ENCODE measurements at regions of chr10 and their contacts with region 1.

Region 1: GRCh38 chr10:97412891-97413304 is 11.8 kb upstream of the RRP12 start:
- DNase-seq: peak; percentile 83
- ATAC-seq: peak; percentile 50
- H3K4me3 Mint-ChIP-seq: peak overlapping the region; percentile 56
- H3K27ac Mint-ChIP-seq: peak overlapping the region; percentile 88
- H3K4me1 Mint-ChIP-seq: peaks cover 59% of the 10 kb centered on the region
- H3K27me3 Mint-ChIP-seq: no peaks in the 10 kb centered on the region

Region 2: DNA sequence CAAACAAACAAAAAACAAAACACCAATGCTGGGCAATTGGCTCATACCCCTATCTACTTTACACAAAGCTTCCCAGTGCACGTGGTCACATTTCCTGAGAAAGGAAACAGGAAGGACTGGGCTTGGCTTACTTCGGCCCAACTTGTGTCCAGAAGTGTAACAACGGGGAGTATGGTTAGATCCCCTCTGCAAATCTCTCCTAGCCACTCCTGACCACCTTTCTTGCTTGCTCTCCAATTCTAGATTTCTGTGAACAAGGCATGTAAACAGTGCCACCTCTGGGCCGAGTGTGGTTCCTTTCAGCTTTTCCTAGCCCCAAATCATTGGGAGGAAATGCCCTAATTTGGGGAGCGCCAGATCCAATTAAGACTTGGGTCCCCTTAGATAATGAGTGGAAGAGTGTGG is 57.3 kb before region 1 on chr10:
- CTCF ChIA-PET with region 1: no interaction called
- DNase-seq: no peak
- ATAC-seq: no peak
- H3K4me3 Mint-ChIP-seq: no peak overlapping the region
- H3K27ac Mint-ChIP-seq: no peak overlapping the region
- H3K4me1 Mint-ChIP-seq: peaks cover 8% of the 10 kb centered on the region
- H3K27me3 Mint-ChIP-seq: no peaks in the 10 kb centered on the region

Region 3: GRCh38 chr10:97425964-97426775 is 13.3 kb after region 1 on chr10 and contains the start of gene PGAM1:
- CTCF ChIA-PET with region 1: interaction called, 122 read pairs
- DNase-seq: peak; percentile 97
- ATAC-seq: peak; percentile 85
- H3K4me3 Mint-ChIP-seq: peak within 1 kb of the TSS; percentile 87
- H3K27ac Mint-ChIP-seq: peak within 1 kb of the TSS; percentile 93
- H3K4me1 Mint-ChIP-seq: peaks cover 46% of the 10 kb centered on the region
- H3K27me3 Mint-ChIP-seq: no peaks in the 10 kb centered on the region
- total RNA-seq, gene PGAM1: 459 to 582 TPM

Region 4: DNA sequence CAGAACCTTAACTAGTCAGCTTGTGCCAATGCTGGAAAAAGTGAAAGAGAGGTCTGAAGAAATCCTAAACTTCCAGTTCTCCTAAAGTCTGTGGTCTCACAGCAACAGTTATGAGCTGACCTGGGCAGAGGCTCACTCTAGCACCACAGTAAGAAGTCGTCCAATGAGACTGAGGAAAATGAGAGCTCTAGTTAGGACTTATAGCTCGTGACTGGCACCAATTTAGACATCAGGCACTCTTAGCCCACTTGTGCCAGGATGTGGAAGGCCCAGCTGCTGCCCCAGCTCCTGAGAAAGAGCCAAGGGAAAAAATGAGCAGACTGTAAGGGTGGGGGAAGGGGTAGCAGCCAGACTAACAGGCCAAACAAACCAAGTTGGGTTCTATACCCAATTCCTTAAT is 77.7 kb after region 1 on chr10:
- CTCF ChIA-PET with region 1: no interaction called
- DNase-seq: no peak
- ATAC-seq: no peak
- H3K4me3 Mint-ChIP-seq: no peak overlapping the region
- H3K27ac Mint-ChIP-seq: no peak overlapping the region
- H3K4me1 Mint-ChIP-seq: peaks cover 28% of the 10 kb centered on the region
- H3K27me3 Mint-ChIP-seq: no peaks in the 10 kb centered on the region

Measured in activated CD8-positive, alpha-beta memory T cell treated with anti-CD3 and anti-CD28 coated beads, Interleukin-2, amount 10 ng/mL, durations not matched to agents 7 days and 5 days (primary cell).